T-cell (primary cell): ENCODE measurements at regions of chr5 and their contacts with region 1.

Region 1: GRCh38 chr5:148831590-148832565 is 5.5 kb downstream of the ADRB2 start:
- DNase-seq: no peak
- ATAC-seq: peak in 1 of 4 experiments; percentile 28
- H3K4me3 ChIP-seq: peak overlapping the region in 1 of 2 donors; percentile 76
- H3K4me3 Mint-ChIP-seq: peak overlapping the region; percentile 24 to 66 (median 25)
- H3K27ac ChIP-seq: peak overlapping the region; percentile 33
- H3K27ac Mint-ChIP-seq: peak overlapping the region; percentile 62 to 85
- H3K4me1 ChIP-seq: peaks cover 0 to 22% of the 10 kb centered on the region in 2 experiments
- H3K4me1 Mint-ChIP-seq: peaks cover 43 to 87% (median 73%) of the 10 kb centered on the region in 3 donors
- H3K27me3 ChIP-seq: no peaks in the 10 kb centered on the region
- H3K27me3 Mint-ChIP-seq: peaks cover 0 to 10% of the 10 kb centered on the region in 2 donors

Region 2: GRCh38 chr5:148776780-148777179 is 55.1 kb before region 1 on chr5:
- CTCF ChIA-PET with region 1: no interaction called
- POLR2A ChIA-PET with region 1: interaction called in 1 of 2 experiments, 10 read pairs
- DNase-seq: no peak
- ATAC-seq: no peak
- H3K4me3 ChIP-seq: no peak overlapping the region
- H3K4me3 Mint-ChIP-seq: no peak overlapping the region
- H3K27ac ChIP-seq: no peak overlapping the region
- H3K27ac Mint-ChIP-seq: no peak overlapping the region
- H3K4me1 ChIP-seq: no peaks in the 10 kb centered on the region
- H3K4me1 Mint-ChIP-seq: no peaks in the 10 kb centered on the region
- H3K27me3 ChIP-seq: peaks cover 0 to 22% of the 10 kb centered on the region in 2 experiments
- H3K27me3 Mint-ChIP-seq: peaks cover 21 to 25% of the 10 kb centered on the region in 2 donors

Region 3: GRCh38 chr5:148820461-148821395 is 11.2 kb before region 1 on chr5:
- CTCF ChIA-PET with region 1: interaction called, 4 to 12 read pairs
- POLR2A ChIA-PET with region 1: no interaction called
- DNase-seq: peak in 4 of 35 experiments; percentile 18 to 65 (median 25)
- ATAC-seq: peak in 2 of 4 experiments; percentile 43 to 48
- H3K4me3 ChIP-seq: no peak overlapping the region
- H3K4me3 Mint-ChIP-seq: no peak overlapping the region
- H3K27ac ChIP-seq: no peak overlapping the region
- H3K27ac Mint-ChIP-seq: no peak overlapping the region
- H3K4me1 ChIP-seq: peaks cover 2 to 6% of the 10 kb centered on the region in 2 experiments
- H3K4me1 Mint-ChIP-seq: peaks cover 4 to 16% (median 6%) of the 10 kb centered on the region in 3 donors
- H3K27me3 ChIP-seq: peaks cover 0 to under 1% of the 10 kb centered on the region in 2 experiments
- H3K27me3 Mint-ChIP-seq: peaks cover 0 to 4% of the 10 kb centered on the region in 2 donors

Region 4: GRCh38 chr5:148849461-148849860 is 17.6 kb after region 1 on chr5:
- CTCF ChIA-PET with region 1: interaction called, 7 to 19 read pairs
- POLR2A ChIA-PET with region 1: interaction called in 1 of 2 experiments, 8 read pairs
- DNase-seq: peak in 29 of 35 experiments; percentile 9 to 70 (median 38)
- ATAC-seq: peak; percentile 76 to 86 (median 84)
- H3K4me3 ChIP-seq: no peak overlapping the region
- H3K4me3 Mint-ChIP-seq: peak overlapping the region in 1 of 3 donors; percentile 76
- H3K27ac ChIP-seq: peak overlapping the region; percentile 86
- H3K27ac Mint-ChIP-seq: peak overlapping the region; percentile 83 to 95
- H3K4me1 ChIP-seq: peaks cover 16 to 67% of the 10 kb centered on the region in 2 experiments
- H3K4me1 Mint-ChIP-seq: peaks cover 32 to 84% (median 69%) of the 10 kb centered on the region in 3 donors
- H3K27me3 ChIP-seq: no peaks in the 10 kb centered on the region
- H3K27me3 Mint-ChIP-seq: peaks cover 0 to 4% of the 10 kb centered on the region in 2 donors